ENCODE measurements at regions of chr16 and their contacts with region 1.

Region 1: GRCh38 chr16:68396481-68396880 is 51.8 kb downstream of the SMPD3 start:
- DNase-seq: no peak
- ATAC-seq: peak in 1 of 8 donors; percentile 28
- H3K4me3 ChIP-seq: no peak overlapping the region
- H3K27ac ChIP-seq: no peak overlapping the region
- H3K4me1 ChIP-seq: no peaks in the 10 kb centered on the region
- H3K27me3 ChIP-seq: peaks cover 0 to 12% (median 0%) of the 10 kb centered on the region in 7 donors
- CTCF ChIP-seq: peak in 8 of 9 donors; percentile 45 to 72 (median 64)

Region 2: DNA sequence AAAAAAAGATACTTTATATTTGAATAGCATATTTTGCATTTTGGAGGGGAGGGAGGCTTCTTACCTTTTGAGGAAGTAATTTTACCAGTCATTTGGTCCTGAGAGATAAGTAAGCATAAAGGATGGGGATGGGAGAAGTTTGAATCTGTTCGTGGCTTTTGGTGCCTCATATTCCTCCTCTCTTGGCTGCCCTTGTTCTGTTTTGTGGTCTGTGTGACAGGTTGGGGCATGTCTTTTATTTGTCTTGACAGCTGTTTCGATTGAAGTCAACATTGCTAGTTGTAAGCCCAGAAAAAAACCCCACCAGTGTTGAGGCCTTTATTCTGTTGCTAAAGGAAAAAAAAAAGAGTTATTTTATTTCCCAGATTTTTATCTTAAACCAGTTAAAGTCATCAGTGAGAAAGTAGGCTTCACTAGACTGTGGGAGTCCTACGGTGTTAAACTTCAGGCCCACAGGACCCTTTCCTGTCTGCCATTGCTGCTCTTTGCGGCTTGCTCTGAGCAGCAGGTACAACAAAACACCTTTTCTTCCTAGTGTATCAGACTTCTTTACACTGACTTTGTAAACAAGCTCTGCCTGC is 120.8 kb before region 1 on chr16:
- intact Hi-C with region 1: no loop called
- DNase-seq: no peak
- ATAC-seq: no peak
- H3K4me3 ChIP-seq: no peak overlapping the region
- H3K27ac ChIP-seq: peak overlapping the region; percentile 56 to 82 (median 66)
- H3K4me1 ChIP-seq: peaks cover 0 to 71% (median 44%) of the 10 kb centered on the region in 9 donors
- H3K27me3 ChIP-seq: no peaks in the 10 kb centered on the region
- CTCF ChIP-seq: no peak

Region 3: DNA sequence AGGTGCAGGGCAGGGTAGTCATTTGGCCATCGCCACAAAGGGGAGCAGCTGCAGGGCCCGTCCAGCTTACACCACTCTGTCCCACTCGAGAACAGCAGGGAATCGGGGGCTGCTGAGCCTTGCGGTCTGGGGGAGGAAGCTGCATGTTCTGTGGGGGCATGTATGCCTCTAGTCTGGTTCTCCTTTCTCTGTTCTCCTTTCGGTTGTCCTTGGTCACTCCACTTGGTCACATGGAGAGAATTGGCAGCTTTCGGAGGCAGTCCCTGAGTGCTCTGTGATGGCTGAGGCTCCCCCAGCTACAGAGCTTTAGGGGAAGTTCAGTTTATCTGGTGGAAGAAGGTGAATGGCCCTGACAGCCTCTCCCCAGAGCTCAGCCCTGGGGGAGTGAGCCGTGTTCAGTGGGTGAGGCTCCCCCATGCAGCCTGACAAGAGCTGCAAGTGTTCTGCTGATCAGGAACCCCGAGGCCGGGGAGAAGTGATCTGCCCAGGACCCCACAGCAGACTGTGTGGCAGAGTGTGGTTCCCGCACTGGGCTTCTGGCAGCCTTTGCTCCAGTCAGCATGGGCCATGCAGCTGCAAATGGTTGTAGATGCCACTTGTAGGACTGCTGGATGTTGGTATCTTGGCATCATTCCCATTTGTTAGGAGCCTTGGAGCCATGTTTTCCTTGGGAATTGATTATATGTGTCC is 74.1 kb after region 1 on chr16:
- intact Hi-C with region 1: loop called in 1 of 10 experiments (anchors 10 kb)
- DNase-seq: peak in 1 of 2 donors; percentile 29
- ATAC-seq: peak; percentile 56 to 87 (median 78)
- H3K4me3 ChIP-seq: peak overlapping the region in 6 of 10 donors; percentile 12 to 40 (median 36)
- H3K27ac ChIP-seq: peak overlapping the region in 8 of 10 donors; percentile 31 to 82 (median 65)
- H3K4me1 ChIP-seq: peaks cover 3 to 63% (median 50%) of the 10 kb centered on the region in 9 donors
- H3K27me3 ChIP-seq: no peaks in the 10 kb centered on the region
- CTCF ChIP-seq: no peak

Region 4: GRCh38 chr16:68503334-68503733 is 106.9 kb after region 1 on chr16:
- intact Hi-C with region 1: loop called in 5 of 10 experiments (anchors 2 to 10 kb)
- DNase-seq: no peak
- ATAC-seq: no peak
- H3K4me3 ChIP-seq: no peak overlapping the region
- H3K27ac ChIP-seq: no peak overlapping the region
- H3K4me1 ChIP-seq: no peaks in the 10 kb centered on the region
- H3K27me3 ChIP-seq: peaks cover 0 to 13% (median 0%) of the 10 kb centered on the region in 7 donors
- CTCF ChIP-seq: no peak

Region 5: GRCh38 chr16:68512183-68512582 is 115.7 kb after region 1 on chr16:
- intact Hi-C with region 1: loop called in 9 of 10 experiments (anchors 1 to 10 kb)
- DNase-seq: no peak
- ATAC-seq: no peak
- H3K4me3 ChIP-seq: no peak overlapping the region
- H3K27ac ChIP-seq: no peak overlapping the region
- H3K4me1 ChIP-seq: peaks cover 0 to 9% (median 8%) of the 10 kb centered on the region in 9 donors
- H3K27me3 ChIP-seq: peaks cover 0 to 22% (median 0%) of the 10 kb centered on the region in 7 donors
- CTCF ChIP-seq: no peak

Measured in heart right ventricle (tissue), 16 donors.